GM12878 (cell line): ENCODE measurements at regions of chr1 and their contacts with region 1.

Region 1: GRCh38 chr1:77010937-77011336 is 143.7 kb downstream of the ST6GALNAC5 start:
- DNase-seq: no peak
- ATAC-seq: no peak
- H3K4me3 ChIP-seq: no peak overlapping the region
- H3K27ac ChIP-seq: no peak overlapping the region
- H3K4me1 ChIP-seq: no peaks in the 10 kb centered on the region
- H3K27me3 ChIP-seq: no peaks in the 10 kb centered on the region
- CTCF ChIP-seq: no peak
- EP300 ChIP-seq: no peak
- POLR2A ChIP-seq: no peak
- RAD21 ChIP-seq: no peak

Region 2: GRCh38 chr1:76933872-76934815 is 76.8 kb before region 1 on chr1:
- CTCF ChIA-PET with region 1: interaction called, 5 read pairs
- POLR2A ChIA-PET with region 1: interaction called, 5 read pairs
- RAD21 ChIA-PET with region 1: interaction called, 18 read pairs
- SMC1A ChIA-PET with region 1: interaction called, 13 read pairs
- in situ Hi-C with region 1: no loop called
- intact Hi-C with region 1: no loop called
- DNase-seq: no peak
- ATAC-seq: peak; percentile 53
- H3K4me3 ChIP-seq: no peak overlapping the region
- H3K27ac ChIP-seq: no peak overlapping the region
- H3K4me1 ChIP-seq: peaks cover 1% of the 10 kb centered on the region; the same call in 1 of the 2 replicates
- H3K27me3 ChIP-seq: no peaks in the 10 kb centered on the region; a peak in 1 of 4 replicates
- CTCF ChIP-seq: no peak
- EP300 ChIP-seq: no peak
- POLR2A ChIP-seq: no peak
- RAD21 ChIP-seq: no peak

Region 3: DNA sequence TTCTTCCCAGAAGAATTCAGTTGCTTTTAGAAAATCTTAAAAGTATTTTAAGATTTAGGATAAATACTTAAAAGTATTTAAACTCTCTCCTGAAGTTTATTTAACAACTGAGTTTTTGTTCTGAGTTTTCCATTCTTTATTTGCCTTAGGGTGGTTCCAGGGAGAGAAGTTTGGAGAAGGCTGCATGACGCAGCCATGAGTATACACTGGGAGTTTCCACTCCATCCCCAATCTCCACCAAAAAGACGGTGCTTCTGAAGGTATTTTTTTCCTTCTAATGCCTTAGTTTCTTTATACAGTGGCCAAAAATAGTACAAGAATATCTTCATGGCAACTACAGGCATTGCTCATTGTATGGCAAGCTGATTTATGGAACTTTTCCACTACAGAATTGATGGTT is 21.0 kb before region 1 on chr1:
- CTCF ChIA-PET with region 1: interaction called, 6 read pairs
- POLR2A ChIA-PET with region 1: no interaction called
- RAD21 ChIA-PET with region 1: interaction called, 4 read pairs
- SMC1A ChIA-PET with region 1: interaction called, 25 read pairs
- in situ Hi-C with region 1: no loop called
- intact Hi-C with region 1: no loop called
- DNase-seq: no peak
- ATAC-seq: no peak
- H3K4me3 ChIP-seq: no peak overlapping the region
- H3K27ac ChIP-seq: no peak overlapping the region
- H3K4me1 ChIP-seq: no peaks in the 10 kb centered on the region
- H3K27me3 ChIP-seq: no peaks in the 10 kb centered on the region
- CTCF ChIP-seq: no peak
- EP300 ChIP-seq: no peak
- POLR2A ChIP-seq: no peak
- RAD21 ChIP-seq: no peak